ENCODE measurements at regions of chr20 and their contacts with region 1.

Region 1: GRCh38 chr20:31951530-31952453 is at the start of gene PDRG1:
- DNase-seq: peak; percentile 94 to 99
- H3K4me3 ChIP-seq: peak within 1 kb of the TSS; percentile 51 to 97 (median 89)
- H3K27ac ChIP-seq: peak within 1 kb of the TSS; percentile 22
- H3K4me1 ChIP-seq: peaks cover 0 to 6% (median 1%) of the 10 kb centered on the region in 4 experiments; a peak in 3 of 7 replicates
- H3K27me3 ChIP-seq: no peaks in the 10 kb centered on the region
- CTCF ChIP-seq: peak; percentile 95 to 99 (median 97)
- EP300 ChIP-seq: no peak
- POLR2A ChIP-seq: peak; percentile 77 to 91
- RAD21 ChIP-seq: peak; percentile 93 to 98
- total RNA-seq, gene PDRG1: 14.2 and 14.5 TPM in 2 replicates

Region 2: DNA sequence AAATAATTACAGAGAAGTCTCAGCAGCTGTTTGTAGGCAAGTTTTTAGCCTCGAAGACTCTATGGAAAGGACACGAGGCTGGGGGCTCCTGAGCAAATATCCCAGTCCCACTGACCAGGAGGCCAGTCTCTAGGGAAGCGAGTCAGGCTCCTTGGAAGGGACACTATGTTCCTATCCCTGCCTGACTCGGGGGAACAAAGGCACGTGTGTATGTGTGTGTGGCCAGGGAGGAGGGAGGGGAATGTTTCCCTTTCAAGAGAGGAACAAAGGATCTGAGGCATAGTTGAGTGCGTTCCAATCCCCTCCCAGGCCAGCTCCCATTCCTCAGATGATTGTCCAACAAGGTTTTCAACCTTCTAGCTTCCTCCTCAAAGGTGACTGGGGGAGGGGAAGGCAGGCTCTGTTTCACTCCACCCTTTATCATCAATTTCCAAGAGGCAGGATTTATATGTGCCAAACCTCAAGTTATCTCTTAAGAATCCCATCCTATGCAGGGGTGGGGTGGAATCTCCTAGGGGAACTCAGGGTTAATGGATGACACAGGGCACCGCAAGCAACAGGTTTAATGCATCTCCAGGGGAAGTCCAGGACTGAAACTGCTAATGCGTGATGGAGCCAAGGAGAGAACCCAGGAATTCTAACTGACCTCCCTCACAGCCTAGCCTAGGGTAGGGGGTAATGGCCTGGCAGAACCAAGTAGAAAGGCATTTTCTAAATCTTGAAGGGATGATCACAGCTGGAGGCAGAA is 239.1 kb before region 1 on chr20:
- CTCF ChIA-PET with region 1: no interaction called
- POLR2A ChIA-PET with region 1: no interaction called
- DNase-seq: peak; percentile 55 to 86
- H3K4me3 ChIP-seq: peak overlapping the region in 3 of 4 experiments; percentile 17 to 43 (median 30); a peak in 4 of 8 replicates
- H3K27ac ChIP-seq: peak overlapping the region; percentile 31
- H3K4me1 ChIP-seq: peaks cover 27 to 44% (median 36%) of the 10 kb centered on the region in 4 experiments
- H3K27me3 ChIP-seq: no peaks in the 10 kb centered on the region
- CTCF ChIP-seq: no peak
- EP300 ChIP-seq: peak in 1 of 2 experiments; percentile 87; a peak in 1 of 3 replicates
- POLR2A ChIP-seq: no peak; a peak in 1 of 3 replicates
- RAD21 ChIP-seq: no peak; a peak in 1 of 4 replicates

Region 3: GRCh38 chr20:31822421-31823330 is 129.1 kb before region 1 on chr20:
- CTCF ChIA-PET with region 1: interaction called, 22 read pairs
- POLR2A ChIA-PET with region 1: no interaction called
- DNase-seq: peak; percentile 49 to 97
- H3K4me3 ChIP-seq: peak overlapping the region in 2 of 4 experiments; percentile 5 to 35; a peak in 2 of 8 replicates
- H3K27ac ChIP-seq: no peak overlapping the region
- H3K4me1 ChIP-seq: peaks cover 0 to 8% (median 2%) of the 10 kb centered on the region in 4 experiments; a peak in 4 of 7 replicates
- H3K27me3 ChIP-seq: no peaks in the 10 kb centered on the region
- CTCF ChIP-seq: peak; percentile 97 to 100 (median 98)
- EP300 ChIP-seq: peak in 1 of 2 experiments; percentile 83; a peak in 1 of 3 replicates
- POLR2A ChIP-seq: no peak
- RAD21 ChIP-seq: peak; percentile 100

Region 4: GRCh38 chr20:31879143-31879987 is 72.4 kb before region 1 on chr20:
- CTCF ChIA-PET with region 1: interaction called, 18 read pairs
- POLR2A ChIA-PET with region 1: interaction called, 3 read pairs
- DNase-seq: peak; percentile 91 to 94
- H3K4me3 ChIP-seq: peak overlapping the region; percentile 58 to 75 (median 71)
- H3K27ac ChIP-seq: no peak overlapping the region
- H3K4me1 ChIP-seq: peaks cover 0 to 3% (median 0%) of the 10 kb centered on the region in 4 experiments; a peak in 1 of 7 replicates
- H3K27me3 ChIP-seq: peaks cover 0 to 3% (median 0%) of the 10 kb centered on the region in 4 experiments; a peak in 3 of 7 replicates
- CTCF ChIP-seq: peak in 2 of 3 experiments; percentile 24 to 35; a peak in 2 of 4 replicates
- EP300 ChIP-seq: peak in 1 of 2 experiments; percentile 45; a peak in 1 of 3 replicates
- POLR2A ChIP-seq: no peak
- RAD21 ChIP-seq: peak; percentile 48 to 59; a peak in 3 of 4 replicates

Region 5: GRCh38 chr20:31962761-31963160 is 11.0 kb after region 1 on chr20:
- CTCF ChIA-PET with region 1: interaction called, 26 read pairs
- POLR2A ChIA-PET with region 1: interaction called, 4 read pairs
- DNase-seq: no peak
- H3K4me3 ChIP-seq: no peak overlapping the region
- H3K27ac ChIP-seq: no peak overlapping the region
- H3K4me1 ChIP-seq: peaks cover 0 to 10% (median 5%) of the 10 kb centered on the region in 4 experiments; a peak in 4 of 7 replicates
- H3K27me3 ChIP-seq: no peaks in the 10 kb centered on the region; a peak in 2 of 7 replicates
- CTCF ChIP-seq: no peak
- EP300 ChIP-seq: no peak
- POLR2A ChIP-seq: no peak
- RAD21 ChIP-seq: no peak

Region 6: GRCh38 chr20:32018269-32019074 is 66.7 kb after region 1 on chr20:
- CTCF ChIA-PET with region 1: interaction called, 11 read pairs
- POLR2A ChIA-PET with region 1: interaction called, 4 read pairs
- DNase-seq: peak; percentile 57 to 99
- H3K4me3 ChIP-seq: peak overlapping the region; percentile 67 to 89 (median 76)
- H3K27ac ChIP-seq: peak overlapping the region; percentile 73; the same call in 1 of the 2 replicates
- H3K4me1 ChIP-seq: peaks cover 0 to 10% (median 7%) of the 10 kb centered on the region in 4 experiments; a peak in 5 of 7 replicates
- H3K27me3 ChIP-seq: peaks cover 0 to 8% (median under 1%) of the 10 kb centered on the region in 4 experiments; a peak in 4 of 7 replicates
- CTCF ChIP-seq: peak; percentile 2 to 39 (median 23)
- EP300 ChIP-seq: no peak
- POLR2A ChIP-seq: peak; percentile 83 to 84; a peak in 2 of 3 replicates
- RAD21 ChIP-seq: no peak

Measured in H1 (cell line).